Posterior vena cava (tissue), 2 donors: ENCODE measurements at regions of chr4 and their contacts with region 1.

Region 1: GRCh38 chr4:51885363-51885762 is 42.4 kb downstream of the DCUN1D4 start:
- DNase-seq: no peak

Region 2: GRCh38 chr4:51831133-51831532 is 54.2 kb before region 1 on chr4:
- intact Hi-C with region 1: no loop called
- DNase-seq: peak; percentile 89

Region 3: DNA sequence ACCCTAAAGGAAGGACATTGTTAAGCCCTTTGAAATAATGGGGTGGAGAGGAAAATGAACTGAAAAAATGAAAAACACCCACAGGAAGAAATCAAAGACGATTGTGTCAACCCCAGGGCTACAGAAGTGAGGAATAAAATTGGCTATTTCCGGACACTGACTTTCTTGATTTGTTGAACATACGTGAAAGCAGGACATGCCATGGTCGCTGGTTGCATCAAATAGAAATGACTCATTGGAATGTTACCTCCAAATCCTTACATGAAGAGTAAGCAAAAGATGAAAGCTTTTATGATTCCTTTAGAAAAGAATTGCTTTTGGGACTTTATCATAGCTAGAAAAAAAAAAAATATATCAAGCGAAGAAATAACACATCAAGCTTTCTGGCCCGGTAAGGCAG is 32.9 kb after region 1 on chr4:
- intact Hi-C with region 1: loop called in 1 of 2 experiments (anchors 1 kb)
- DNase-seq: no peak